ENCODE measurements at regions of chrX and their contacts with region 1.

Region 1: DNA sequence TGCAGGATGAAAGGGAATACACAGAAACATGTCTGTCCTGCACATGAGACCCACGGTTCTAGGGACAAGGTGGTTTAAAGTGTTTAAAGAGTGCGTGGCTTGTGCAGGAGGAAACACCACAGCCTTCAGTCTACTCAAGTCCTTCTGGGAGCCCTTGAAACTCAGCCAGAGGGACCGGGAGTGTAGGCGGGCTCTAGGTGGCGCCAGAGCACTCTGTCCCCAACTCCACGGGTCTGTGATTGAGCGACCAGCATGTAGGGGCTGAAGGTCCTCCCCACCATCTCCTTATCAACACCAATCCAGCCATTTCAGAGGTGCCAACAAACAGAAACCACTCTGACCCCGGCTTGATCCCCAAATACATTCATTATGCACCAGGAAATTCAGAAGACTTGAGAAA is 82.0 kb upstream of the CLDN34 start:
- DNase-seq: peak; percentile 90

Region 2: GRCh38 chrX:9355739-9356138 is 529.4 kb before region 1 on chrX:
- in situ Hi-C with region 1: no loop called
- DNase-seq: peak; percentile 44

Region 3: DNA sequence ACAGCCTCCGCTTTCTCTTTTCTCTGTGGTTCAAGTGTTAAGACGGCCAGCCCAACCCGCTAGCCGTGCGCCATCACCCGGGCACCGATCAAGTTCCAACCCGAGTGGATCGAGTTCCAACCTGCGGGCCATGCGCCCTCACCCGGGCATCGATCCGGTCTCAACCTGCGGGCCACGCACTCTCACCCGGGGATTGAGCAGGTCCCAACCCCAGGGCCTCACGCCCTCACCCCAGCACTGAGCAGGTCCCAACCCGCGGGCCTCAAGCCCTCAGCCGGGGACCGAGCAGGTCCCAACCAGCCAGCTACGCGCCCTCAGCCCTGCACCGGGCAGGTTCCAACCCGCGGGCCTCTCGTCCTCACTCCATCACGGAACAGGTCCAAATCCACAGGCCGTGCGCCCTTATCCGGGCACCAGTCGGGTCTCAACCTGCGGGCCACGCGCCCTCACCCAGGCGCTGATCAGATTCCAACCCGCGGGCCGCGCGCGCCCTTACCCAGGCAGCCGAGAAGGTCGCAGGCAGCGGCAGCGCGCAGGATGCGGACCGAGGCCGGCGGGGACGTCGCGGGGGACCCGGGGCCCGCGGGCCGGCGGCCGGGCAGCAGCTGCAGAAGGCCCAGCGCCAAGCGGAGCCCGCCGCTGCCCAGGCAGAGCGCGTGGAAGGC is 119.9 kb before region 1 on chrX:
- in situ Hi-C with region 1: no loop called
- DNase-seq: no peak

Region 4: GRCh38 chrX:9995855-9996339 is 110.7 kb after region 1 on chrX:
- in situ Hi-C with region 1: loop called (anchors 25 kb)
- DNase-seq: peak; percentile 83

Region 5: DNA sequence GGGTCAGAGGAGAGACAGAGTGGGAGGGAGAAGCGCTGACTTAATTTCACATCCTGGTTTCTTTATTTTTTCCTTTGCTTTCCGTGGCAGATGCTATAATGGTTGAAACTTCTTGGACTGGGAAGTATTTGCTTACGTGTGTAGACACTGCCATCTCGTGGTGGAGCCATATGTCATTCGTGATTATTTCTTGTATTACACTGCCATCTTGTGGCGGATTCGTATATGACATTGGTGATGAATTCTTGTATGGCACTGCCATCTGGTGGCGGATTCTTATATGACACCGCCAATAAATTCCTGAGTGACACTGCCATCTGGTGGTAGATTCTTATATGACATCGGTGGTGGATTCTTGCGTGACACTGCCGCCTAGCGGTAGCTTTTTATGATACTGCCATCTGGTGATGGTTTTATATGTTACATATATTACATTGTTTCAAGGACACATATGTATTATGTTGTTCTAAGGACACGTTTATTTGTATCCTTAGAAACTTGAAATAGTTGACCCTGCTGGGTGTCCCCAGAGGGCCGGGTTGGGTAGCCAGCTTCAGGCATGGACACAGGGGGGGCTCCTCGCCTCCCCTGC is 234.3 kb after region 1 on chrX:
- in situ Hi-C with region 1: loop called (anchors 25 kb)
- DNase-seq: peak; percentile 94

Measured in KBM-7 (cell line).